Left cardiac atrium (tissue), 4 donors: ENCODE measurements at regions of chr10 and their contacts with region 1.

Region 1: DNA sequence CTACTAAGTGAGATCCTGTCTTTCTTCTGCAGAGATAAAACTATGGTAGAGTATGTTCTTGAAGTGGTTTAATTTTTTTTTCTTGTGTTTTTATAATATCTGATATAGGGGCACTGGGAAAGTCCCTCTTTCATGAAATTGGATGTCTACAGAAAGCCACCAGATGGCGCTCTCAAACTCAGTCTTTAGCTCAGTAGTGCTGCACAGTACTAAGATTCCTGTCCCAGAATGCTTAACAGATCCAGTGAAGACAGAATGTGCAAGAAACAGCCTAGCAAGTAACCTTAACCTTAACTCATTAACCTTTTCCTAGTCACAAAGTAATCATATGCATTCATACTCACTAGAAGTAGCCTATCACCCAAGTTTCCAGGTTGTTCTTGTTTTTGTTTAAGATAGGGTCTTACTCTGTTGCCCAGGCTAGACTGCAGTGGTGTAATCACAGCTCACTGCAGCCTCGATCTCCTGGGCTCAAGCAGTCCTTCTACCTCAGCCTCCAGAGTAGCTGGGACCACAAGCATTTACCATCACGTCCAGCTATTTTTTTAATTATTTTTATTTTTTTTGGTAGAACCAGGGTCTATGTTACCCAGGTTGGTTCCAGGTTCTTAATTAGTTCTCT is 56.7 kb downstream of the IDE start:
- DNase-seq: peak; percentile 59
- ATAC-seq: peak; percentile 59 to 86

Region 2: GRCh38 chr10:92573798-92574547 is 56.8 kb after region 1 on chr10 and contains the start of gene IDE:
- intact Hi-C with region 1: loop called (anchors 1 to 2 kb)
- DNase-seq: peak; percentile 89
- ATAC-seq: peak; percentile 96 to 97
- total RNA-seq, gene IDE: 42.4 to 46.1 TPM

Region 3: DNA sequence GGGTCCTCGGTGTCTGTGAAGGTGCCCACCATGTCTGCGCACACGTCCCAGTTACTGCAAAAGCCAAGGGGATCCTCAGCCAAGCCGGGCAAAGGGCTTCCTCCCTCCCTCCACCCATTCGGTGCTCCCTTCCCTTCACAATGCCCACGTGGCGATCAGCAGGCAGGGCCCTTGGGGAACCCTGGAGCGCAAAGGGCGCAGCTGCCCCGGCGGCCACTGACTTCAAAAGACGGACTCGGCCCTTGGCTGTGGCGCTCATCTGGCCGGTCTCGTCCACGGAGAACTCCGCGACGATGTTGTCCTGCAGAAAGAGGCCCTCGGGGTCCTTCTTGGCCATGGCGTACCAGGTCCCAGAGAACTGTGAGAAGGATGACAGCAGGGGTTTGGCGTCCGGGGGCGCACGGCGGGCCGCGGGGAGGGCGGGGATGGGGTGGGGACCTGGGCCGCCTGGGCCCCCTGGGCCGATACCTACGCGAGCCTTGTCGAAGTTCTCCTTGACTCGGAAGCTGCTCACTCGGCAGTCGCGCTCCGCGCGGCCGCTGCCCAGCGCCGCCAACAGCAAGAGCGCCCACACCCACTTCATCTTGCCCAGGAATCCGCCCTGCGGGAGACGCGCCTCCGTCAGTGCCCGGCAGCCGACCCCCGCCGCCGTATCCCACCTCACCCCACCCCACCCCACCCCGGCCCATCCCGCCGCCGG is 1083.5 kb after region 1 on chr10:
- intact Hi-C with region 1: no loop called
- DNase-seq: peak; percentile 47
- ATAC-seq: peak; percentile 69 to 75